ENCODE measurements at regions of chr12 and their contacts with region 1.

Region 1: DNA sequence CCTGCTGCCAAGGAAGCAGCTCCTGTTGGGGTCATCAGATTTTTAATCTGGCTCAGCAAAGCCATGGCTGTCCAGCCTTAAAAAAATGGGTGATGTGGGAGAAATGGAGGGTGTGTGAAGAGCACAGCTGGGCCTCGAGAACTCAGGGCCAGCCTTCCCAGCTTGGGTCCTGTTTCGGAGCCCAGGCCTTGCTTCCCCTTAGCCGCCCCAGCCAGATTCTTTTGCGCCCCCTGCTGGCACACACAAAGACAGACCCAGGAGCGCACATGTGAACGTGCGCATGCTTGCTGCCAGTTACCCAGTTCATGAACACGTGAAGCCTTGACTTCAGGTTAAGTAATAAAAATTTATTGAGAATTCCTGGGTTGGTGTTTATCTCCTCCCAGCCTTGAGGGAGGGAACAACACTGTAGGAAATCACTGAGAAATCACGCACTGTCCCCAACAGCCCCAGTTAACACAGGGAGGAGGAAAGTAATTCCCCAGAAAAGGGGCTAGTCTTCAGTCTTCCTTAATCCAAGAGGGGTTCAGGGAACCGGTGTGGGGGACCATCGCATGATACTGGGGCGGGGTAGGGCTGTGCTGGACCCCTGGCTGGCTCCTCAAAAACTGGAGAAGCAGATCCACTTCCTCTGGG is 5.3 kb downstream of the PHB2 start:
- DNase-seq: peak; percentile 91
- ATAC-seq: peak; percentile 58
- H3K4me3 Mint-ChIP-seq: no peak overlapping the region
- H3K27ac Mint-ChIP-seq: peak overlapping the region; percentile 82
- H3K4me1 Mint-ChIP-seq: peaks cover 61% of the 10 kb centered on the region
- H3K27me3 Mint-ChIP-seq: no peaks in the 10 kb centered on the region

Region 2: GRCh38 chr12:6944381-6945186 is 20.6 kb before region 1 on chr12:
- CTCF ChIA-PET with region 1: interaction called, 709 read pairs
- DNase-seq: peak; percentile 95
- ATAC-seq: peak; percentile 50
- H3K4me3 Mint-ChIP-seq: peak overlapping the region; percentile 86
- H3K27ac Mint-ChIP-seq: peak overlapping the region; percentile 98
- H3K4me1 Mint-ChIP-seq: peaks cover 61% of the 10 kb centered on the region
- H3K27me3 Mint-ChIP-seq: peaks cover 4% of the 10 kb centered on the region

Region 3: DNA sequence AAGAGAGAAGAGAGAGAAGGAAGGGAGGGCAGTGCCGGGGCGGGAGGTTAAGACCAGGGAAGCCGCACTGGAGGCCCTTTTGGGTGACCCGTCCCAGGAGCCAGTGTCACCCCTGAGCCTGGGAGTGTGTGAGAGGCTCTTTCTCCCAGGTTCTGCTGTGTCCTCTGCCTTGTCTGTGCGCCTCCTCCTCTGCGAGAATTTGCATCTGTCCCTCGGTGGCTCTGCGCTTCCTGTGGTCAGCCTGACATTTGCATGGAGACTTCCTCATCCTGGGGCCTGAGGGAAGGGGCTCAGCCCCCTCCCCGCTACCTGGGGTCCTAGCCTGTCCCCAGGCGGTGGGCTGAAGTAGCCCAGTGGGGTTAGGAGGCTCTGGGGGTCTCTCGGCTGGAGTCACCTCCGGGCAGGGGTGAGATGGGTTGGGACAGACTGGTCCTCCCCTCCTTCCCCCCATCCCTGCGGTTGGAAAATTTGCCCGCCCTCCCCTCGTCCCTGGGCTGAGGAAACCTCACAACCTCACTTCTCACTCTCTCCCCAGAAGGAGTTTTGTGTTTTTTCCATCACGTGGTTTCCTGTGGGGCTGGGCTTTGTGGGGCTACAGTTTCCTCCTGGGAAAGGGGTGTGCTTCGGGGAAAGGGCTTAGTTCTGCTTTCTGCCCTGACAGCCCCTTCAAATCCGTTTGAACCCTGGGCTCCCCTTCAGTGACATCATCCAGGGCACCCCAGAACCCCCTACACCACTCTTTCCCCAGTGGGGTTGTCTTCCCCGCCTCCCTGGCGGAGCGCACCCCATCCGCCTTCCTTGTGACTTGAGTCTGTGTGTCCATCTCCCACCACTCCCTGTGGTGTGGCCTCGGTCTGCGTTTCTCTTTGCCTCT is 11.5 kb before region 1 on chr12:
- CTCF ChIA-PET with region 1: interaction called, 709 read pairs
- DNase-seq: peak; percentile 91
- ATAC-seq: peak; percentile 31
- H3K4me3 Mint-ChIP-seq: peak overlapping the region; percentile 93
- H3K27ac Mint-ChIP-seq: peak overlapping the region; percentile 96
- H3K4me1 Mint-ChIP-seq: peaks cover 79% of the 10 kb centered on the region
- H3K27me3 Mint-ChIP-seq: no peaks in the 10 kb centered on the region